Activated CD8-positive, alpha-beta memory T cell treated with anti-CD3 and anti-CD28 coated beads, Interleukin-2, amount 10 ng/mL, durations not matched to agents 7 days and 5 days (primary cell): ENCODE measurements at regions of chr19 and their contacts with region 1.

Region 1: GRCh38 chr19:38374429-38375176 is at the start of gene PSMD8:
- DNase-seq: peak; percentile 100
- ATAC-seq: peak; percentile 99
- H3K4me3 Mint-ChIP-seq: peak within 1 kb of the TSS; percentile 98
- H3K27ac Mint-ChIP-seq: peak within 1 kb of the TSS; percentile 98
- H3K4me1 Mint-ChIP-seq: peaks cover 22% of the 10 kb centered on the region
- H3K27me3 Mint-ChIP-seq: peaks cover 4% of the 10 kb centered on the region
- total RNA-seq, gene PSMD8: 164 to 204 TPM

Region 2: GRCh38 chr19:38233740-38234251 is 140.8 kb before region 1 on chr19:
- CTCF ChIA-PET with region 1: interaction called, 10 read pairs
- DNase-seq: peak; percentile 86
- ATAC-seq: peak; percentile 59
- H3K4me3 Mint-ChIP-seq: no peak overlapping the region
- H3K27ac Mint-ChIP-seq: no peak overlapping the region
- H3K4me1 Mint-ChIP-seq: peaks cover 5% of the 10 kb centered on the region
- H3K27me3 Mint-ChIP-seq: peaks cover 29% of the 10 kb centered on the region

Region 3: DNA sequence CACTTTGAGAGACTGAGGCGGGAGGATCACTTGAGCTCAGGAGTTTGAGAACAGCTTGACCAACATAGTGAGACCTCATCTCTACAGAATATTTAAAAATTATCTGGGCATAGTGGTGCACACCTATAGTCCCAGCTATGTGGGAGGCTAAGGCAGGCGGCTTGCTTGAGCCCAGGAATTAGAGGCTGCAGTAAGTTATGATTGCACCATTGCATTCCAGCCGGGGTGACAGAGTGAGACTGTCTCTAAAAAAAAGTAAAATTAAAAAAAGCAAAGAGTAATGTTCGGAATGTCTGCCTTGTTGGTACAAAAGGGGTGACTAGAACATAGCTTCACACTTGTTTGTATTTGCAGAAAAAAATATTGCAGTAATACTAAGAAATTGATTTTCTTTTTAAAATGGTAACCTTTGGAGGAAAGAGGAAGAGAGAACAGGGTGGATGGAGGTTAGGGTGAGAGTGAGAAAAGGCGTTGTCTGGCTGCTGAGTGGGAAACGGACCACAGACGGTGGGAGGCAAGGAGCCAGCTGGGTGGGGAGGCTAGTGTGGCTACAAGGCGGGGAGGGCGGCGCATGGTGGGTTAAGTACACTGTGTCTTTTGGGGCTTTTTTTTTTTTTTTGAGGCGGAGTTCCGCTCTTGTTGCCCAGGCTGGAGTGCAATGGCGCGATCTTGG is 128.6 kb before region 1 on chr19:
- CTCF ChIA-PET with region 1: interaction called, 16 read pairs
- DNase-seq: no peak
- ATAC-seq: no peak
- H3K4me3 Mint-ChIP-seq: no peak overlapping the region
- H3K27ac Mint-ChIP-seq: no peak overlapping the region
- H3K4me1 Mint-ChIP-seq: peaks cover 4% of the 10 kb centered on the region
- H3K27me3 Mint-ChIP-seq: no peaks in the 10 kb centered on the region

Region 4: DNA sequence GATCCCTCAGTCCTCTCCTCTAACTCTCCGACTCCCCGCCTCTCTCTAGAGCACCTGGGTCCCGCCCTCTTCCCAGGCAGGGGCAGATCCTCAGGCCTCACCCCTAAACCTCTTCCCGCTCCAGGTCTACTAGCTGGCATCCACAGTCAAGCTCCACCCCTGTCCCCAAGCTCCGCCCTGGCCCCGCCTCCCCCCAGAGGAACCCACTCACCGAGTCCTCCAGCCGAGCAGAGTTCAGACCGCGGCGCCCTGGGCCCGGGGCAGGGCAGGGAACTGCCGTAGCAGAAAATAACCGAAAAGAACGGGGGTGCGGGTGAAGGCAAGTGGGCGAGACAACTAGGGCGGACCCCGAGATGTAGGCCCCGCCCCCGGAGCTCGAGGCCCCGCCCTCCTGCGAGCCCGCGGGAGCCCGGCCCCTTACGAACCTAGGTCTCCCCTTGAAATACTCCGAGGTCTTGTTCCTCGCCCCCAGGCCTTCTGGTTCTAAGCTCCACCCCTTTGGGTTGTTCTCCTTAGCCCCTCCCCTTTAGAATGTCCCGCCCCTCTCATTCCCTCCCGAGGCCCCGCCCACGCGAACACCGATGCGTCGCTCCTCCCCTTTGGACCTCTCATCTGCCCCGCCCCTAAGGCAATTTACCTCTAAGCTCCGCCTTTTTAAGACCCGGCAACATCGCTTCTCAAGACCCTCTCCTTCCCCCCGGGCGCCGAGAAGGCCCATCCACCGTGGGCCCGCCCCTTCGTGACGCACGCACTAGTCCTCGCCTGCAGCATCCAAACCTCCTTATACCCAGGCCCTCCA is 13.1 kb after region 1 on chr19 and contains the start of gene GGN:
- CTCF ChIA-PET with region 1: interaction called, 17 read pairs
- DNase-seq: peak; percentile 84
- ATAC-seq: peak; percentile 77
- H3K4me3 Mint-ChIP-seq: peak within 1 kb of the TSS; percentile 70
- H3K27ac Mint-ChIP-seq: peak within 1 kb of the TSS; percentile 44
- H3K4me1 Mint-ChIP-seq: peaks cover 16% of the 10 kb centered on the region
- H3K27me3 Mint-ChIP-seq: peaks cover 37% of the 10 kb centered on the region
- total RNA-seq, gene GGN: not detected